Body of pancreas (tissue), 4 donors: ENCODE measurements at regions of chr16 and their contacts with region 1.

Region 1: DNA sequence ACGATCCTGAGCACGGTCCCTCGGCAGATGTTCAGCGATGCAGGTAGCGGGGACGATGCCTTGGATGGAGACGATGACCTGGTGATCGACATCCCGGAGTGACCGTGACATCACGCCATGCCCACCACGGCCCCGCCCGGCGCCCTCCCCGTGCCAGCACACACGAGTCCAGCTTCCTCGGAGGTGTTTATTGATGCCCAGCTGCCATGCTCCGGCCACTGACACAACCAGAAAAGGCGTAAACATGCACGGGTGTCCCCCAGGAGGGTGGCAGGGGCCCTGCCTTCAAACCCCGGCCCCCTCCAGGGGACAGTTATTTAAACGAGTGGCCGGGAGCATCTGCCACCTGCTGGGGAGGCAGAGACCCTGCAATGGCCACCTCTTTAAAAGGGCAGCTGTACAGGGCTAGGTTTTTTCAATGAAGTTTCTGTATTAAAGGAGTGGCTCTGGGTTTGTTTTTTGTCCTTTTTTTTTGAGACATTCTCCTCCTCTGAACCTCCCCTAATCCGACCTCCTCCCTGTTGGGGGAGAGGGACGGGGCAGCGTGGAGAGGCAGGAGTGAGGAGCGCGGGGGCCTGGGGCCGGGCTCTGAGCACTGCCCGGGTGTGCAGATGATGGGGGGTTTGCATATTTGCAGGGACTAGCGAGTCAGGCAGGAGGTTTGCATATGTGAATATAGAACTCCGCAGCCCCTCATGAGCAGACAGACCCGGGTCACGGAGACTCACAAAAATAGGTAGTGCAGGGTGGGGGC is 5.3 kb downstream of the DOC2A start:
- DNase-seq: peak; percentile 36 to 50 (median 41)
- ATAC-seq: peak; percentile 58
- H3K4me3 ChIP-seq: no peak overlapping the region
- H3K27ac ChIP-seq: no peak overlapping the region
- H3K4me1 ChIP-seq: peaks cover 17% of the 10 kb centered on the region
- H3K27me3 ChIP-seq: peaks cover 3 to 10% of the 10 kb centered on the region in 2 donors
- CTCF ChIP-seq: peak; percentile 72 to 79 (median 74)
- POLR2A ChIP-seq: no peak

Region 2: GRCh38 chr16:29700253-29700987 is 305.1 kb before region 1 on chr16:
- intact Hi-C with region 1: loop called (anchors 10 kb)
- DNase-seq: peak; percentile 76 to 82 (median 80)
- ATAC-seq: peak; percentile 93
- H3K4me3 ChIP-seq: no peak overlapping the region
- H3K27ac ChIP-seq: no peak overlapping the region
- H3K4me1 ChIP-seq: no peaks in the 10 kb centered on the region
- H3K27me3 ChIP-seq: no peaks in the 10 kb centered on the region
- CTCF ChIP-seq: peak; percentile 83 to 97 (median 88)
- POLR2A ChIP-seq: no peak

Region 3: GRCh38 chr16:29900102-29900887 is 105.2 kb before region 1 on chr16 and contains the start of gene ASPHD1:
- intact Hi-C with region 1: loop called (anchors 10 kb)
- DNase-seq: peak; percentile 78 to 89 (median 83)
- ATAC-seq: peak; percentile 80
- H3K4me3 ChIP-seq: peak within 1 kb of the TSS; percentile 24 to 62
- H3K27ac ChIP-seq: peak within 1 kb of the TSS; percentile 68 to 93 (median 80)
- H3K4me1 ChIP-seq: peaks cover 25% of the 10 kb centered on the region
- H3K27me3 ChIP-seq: no peaks in the 10 kb centered on the region
- CTCF ChIP-seq: peak in 1 of 7 experiments; percentile 7
- POLR2A ChIP-seq: peak in 2 of 3 donors; percentile 61 to 79
- total RNA-seq, gene ASPHD1: 4.7 to 8.2 TPM

Region 4: DNA sequence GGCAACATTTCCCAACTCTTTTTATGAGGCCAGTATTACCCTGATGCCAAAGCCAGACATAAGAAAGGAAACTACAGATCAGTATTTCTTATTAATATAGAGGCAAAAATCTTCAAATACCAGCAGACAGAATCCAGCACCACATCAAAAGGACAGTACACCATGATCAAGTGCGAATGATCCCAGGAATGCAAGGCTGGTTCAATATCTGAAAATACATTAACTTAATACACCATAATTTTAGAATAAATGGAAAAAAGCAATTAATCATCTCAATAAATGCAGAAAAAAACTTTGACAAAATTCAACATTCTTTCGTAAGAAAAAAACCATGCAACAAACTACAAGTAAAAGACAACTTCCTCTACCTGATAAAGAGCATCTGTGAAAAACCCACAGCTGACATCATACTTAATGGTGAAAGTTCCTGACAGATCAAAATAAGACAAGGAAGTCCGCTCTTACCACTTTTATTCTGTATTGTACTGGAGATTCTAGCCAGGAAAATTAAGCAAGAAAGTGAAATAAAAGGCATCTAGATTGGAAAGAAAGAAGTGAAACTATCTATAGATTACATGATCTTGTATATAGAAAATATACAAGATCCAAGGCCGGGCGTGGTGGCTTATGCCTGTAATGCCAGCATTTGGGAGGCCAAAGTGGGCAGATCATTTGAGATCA is 143.9 kb after region 1 on chr16:
- intact Hi-C with region 1: no loop called
- DNase-seq: no peak
- ATAC-seq: no peak
- H3K4me3 ChIP-seq: no peak overlapping the region
- H3K27ac ChIP-seq: no peak overlapping the region
- H3K4me1 ChIP-seq: no peaks in the 10 kb centered on the region
- H3K27me3 ChIP-seq: no peaks in the 10 kb centered on the region
- CTCF ChIP-seq: no peak
- POLR2A ChIP-seq: no peak